Vagina (tissue), 2 donors: ENCODE measurements at regions of chr3 and their contacts with region 1.

Region 1: DNA sequence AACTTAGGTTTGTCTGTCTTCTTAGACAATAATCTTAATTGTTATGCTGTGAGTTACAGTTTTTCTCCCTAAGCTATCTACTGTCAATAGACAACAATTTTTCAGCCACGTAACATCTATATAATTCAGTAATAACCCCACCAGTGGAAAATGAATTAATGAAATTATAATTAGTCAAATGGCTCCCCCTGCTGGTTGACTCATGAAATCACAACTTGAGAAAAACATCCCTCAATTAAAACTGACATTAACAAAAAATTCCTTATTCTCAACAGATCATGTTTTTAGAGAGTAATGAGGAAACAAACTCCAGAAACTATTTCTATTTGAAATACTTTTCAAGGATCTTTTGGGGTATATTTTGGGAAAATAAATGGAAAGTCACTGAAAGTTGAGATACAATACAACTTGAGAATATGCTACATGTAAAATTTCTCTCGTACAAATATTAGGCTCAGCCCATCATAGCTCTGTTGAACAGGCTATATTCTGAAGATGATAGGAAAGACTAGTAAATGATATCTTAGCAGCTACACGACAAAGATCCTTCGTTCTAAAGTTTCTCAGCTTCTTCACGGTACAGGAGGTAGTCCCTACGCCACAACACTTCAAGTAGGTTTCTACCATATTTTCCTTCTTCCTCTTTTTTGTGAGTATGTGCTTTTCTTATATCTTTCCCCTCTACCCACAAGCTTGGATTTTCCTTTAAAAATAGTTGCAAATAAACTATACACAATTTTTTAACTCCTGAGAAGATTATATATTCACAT is 20.7 kb downstream of the PPP1R2 start:
- DNase-seq: no peak
- H3K4me3 ChIP-seq: no peak overlapping the region
- H3K27ac ChIP-seq: no peak overlapping the region
- H3K4me1 ChIP-seq: peaks cover 5% of the 10 kb centered on the region
- H3K27me3 ChIP-seq: no peaks in the 10 kb centered on the region
- CTCF ChIP-seq: peak; percentile 62 to 83 (median 75)
- POLR2A ChIP-seq: no peak

Region 2: DNA sequence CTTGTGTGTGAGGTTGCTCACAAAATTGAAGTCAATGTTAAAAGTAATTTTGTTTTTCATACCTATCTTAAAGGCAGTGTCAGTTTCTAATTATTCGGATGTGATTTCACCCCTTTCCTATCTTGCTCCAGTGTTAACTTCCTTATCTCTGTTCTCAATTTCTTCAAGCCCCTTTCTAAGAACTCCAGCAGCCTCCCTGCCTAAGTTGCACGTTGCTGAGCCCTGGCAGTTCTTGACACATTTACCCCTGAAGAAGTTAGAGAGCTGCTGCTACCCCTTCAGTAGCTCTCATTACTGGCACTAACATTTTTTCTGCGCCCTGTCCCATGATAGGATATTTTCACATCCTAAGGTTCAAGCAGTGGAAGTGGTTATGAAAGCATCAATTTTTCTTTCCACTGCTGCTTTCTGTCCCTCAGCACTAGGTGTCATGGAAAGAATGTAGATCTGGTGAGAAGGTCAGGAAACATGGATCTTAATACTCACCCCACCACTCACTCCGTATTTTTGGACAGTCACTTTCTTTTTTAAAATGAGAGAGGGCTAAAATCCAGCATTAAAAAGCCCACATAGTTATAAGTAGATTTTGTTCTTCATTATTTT is 1866.5 kb before region 1 on chr3:
- intact Hi-C with region 1: no loop called
- DNase-seq: no peak
- H3K4me3 ChIP-seq: no peak overlapping the region
- H3K27ac ChIP-seq: no peak overlapping the region
- H3K4me1 ChIP-seq: no peaks in the 10 kb centered on the region
- H3K27me3 ChIP-seq: no peaks in the 10 kb centered on the region
- CTCF ChIP-seq: no peak
- POLR2A ChIP-seq: no peak

Region 3: GRCh38 chr3:194671900-194672808 is 850.3 kb before region 1 on chr3 and contains the start of gene LSG1:
- intact Hi-C with region 1: loop called (anchors 10 kb)
- DNase-seq: peak in 1 of 2 donors; percentile 92
- H3K4me3 ChIP-seq: peak within 1 kb of the TSS; percentile 70 to 77
- H3K27ac ChIP-seq: peak within 1 kb of the TSS; percentile 76
- H3K4me1 ChIP-seq: peaks cover 20% of the 10 kb centered on the region
- H3K27me3 ChIP-seq: no peaks in the 10 kb centered on the region
- CTCF ChIP-seq: peak in 1 of 3 experiments; percentile 18
- POLR2A ChIP-seq: no peak
- total RNA-seq, gene LSG1: 40.3 TPM

Region 4: DNA sequence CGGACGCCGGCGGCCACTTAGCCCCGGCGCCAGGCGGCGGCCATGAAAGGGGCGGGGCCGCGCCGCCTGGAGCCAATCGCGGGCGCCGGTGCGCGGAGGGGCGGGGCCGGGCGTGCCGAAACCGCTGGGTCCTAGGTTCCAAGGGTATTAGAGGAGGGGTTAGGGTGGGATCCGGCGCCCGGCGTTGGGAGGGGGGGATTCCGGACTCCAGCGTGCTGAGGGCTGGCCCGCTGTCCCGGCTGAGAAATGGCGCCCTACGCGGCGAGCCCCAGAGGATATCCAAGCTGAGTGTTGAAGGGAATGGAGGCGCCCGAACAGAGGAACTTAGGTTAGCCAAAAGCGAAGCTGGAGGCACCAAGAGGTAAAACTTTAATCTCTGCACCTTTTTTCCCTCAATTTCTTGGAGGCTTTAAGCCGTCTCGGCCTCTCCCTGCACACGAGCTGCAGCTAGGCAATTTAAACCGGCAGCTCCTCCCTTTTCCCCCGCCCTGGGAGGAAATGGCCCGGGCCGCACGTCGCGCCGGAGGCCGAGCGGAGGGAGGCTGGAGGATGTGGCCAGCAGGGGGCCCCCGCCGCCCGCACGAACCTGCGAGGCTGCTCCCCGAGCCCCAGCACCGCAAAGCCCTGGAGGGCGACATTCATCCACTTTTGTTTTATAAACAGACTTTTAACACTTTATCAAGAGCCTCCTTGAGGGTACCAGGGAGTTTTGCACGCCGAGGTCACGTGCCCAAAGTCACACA is 251.2 kb before region 1 on chr3 and contains the start of gene XXYLT1:
- intact Hi-C with region 1: loop called (anchors 2 kb)
- DNase-seq: no peak
- H3K4me3 ChIP-seq: peak within 1 kb of the TSS; percentile 71 to 76
- H3K27ac ChIP-seq: peak within 1 kb of the TSS; percentile 85
- H3K4me1 ChIP-seq: peaks cover 28% of the 10 kb centered on the region
- H3K27me3 ChIP-seq: no peaks in the 10 kb centered on the region
- CTCF ChIP-seq: peak; percentile 91 to 97 (median 96)
- POLR2A ChIP-seq: no peak
- total RNA-seq, gene XXYLT1: 14.5 TPM